ENCODE measurements at regions of chr3 and their contacts with region 1.

Region 1: DNA sequence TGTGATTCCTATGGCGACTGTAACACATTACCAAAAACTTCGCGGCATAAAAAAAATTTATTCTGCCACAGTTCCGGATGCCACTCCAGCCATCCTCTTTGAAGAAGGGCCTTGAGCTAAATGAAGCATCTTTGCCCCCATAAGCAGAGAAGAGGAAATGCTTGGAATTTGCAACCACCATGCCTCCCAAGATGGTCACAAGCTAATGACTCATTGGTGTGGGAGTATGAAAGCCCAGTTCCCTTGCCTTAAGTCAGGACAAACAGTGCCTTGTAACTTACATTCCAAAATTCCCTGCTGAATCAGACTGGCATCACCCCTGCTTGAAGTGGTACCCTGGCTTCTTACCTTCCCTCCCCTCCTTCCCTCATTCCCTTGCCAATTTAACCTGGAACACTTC is 1077.4 kb downstream of the EPHA3 start:
- DNase-seq: peak; percentile 8
- ATAC-seq: 0 out of 2 replicates have a peak, but pooled peaks have one; percentile 21
- H3K4me3 ChIP-seq: no peak overlapping the region
- H3K27ac ChIP-seq: no peak overlapping the region
- H3K4me1 ChIP-seq: no peaks in the 10 kb centered on the region
- H3K27me3 ChIP-seq: no peaks in the 10 kb centered on the region
- CTCF ChIP-seq: no peak
- POLR2A ChIP-seq: no peak
- RAD21 ChIP-seq: no peak

Region 2: DNA sequence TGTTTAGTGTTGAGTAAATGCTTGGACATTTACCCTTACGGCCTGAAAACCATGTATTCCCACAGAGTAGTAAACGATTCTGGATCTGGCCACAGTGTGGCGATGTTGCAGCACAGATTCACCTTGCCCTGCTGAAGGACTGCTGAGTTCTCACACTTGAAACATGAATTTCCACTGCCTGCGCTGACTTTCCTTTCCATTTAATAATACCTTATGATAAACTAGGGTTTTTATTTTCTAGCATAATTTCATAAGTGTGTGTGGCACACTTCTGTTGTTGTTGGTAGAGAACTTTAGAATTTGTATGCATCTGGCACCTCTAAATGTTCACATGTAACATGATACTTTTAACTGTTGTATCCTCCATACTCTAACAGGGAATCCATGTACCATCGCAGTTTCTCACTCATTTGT is 1981.2 kb before region 1 on chr3:
- CTCF ChIA-PET with region 1: no interaction called
- POLR2A ChIA-PET with region 1: no interaction called
- dilution Hi-C with region 1: no loop called
- in situ Hi-C with region 1: loop called (anchors 10 kb)
- intact Hi-C with region 1: no loop called
- DNase-seq: peak; percentile 67
- ATAC-seq: peak; percentile 100
- H3K4me3 ChIP-seq: no peak overlapping the region
- H3K27ac ChIP-seq: no peak overlapping the region
- H3K4me1 ChIP-seq: no peaks in the 10 kb centered on the region
- H3K27me3 ChIP-seq: 0 out of 2 replicates have a peak, but pooled peaks cover 1% of the 10 kb centered on the region
- CTCF ChIP-seq: peak; percentile 83
- POLR2A ChIP-seq: no peak
- RAD21 ChIP-seq: peak; percentile 87

Region 3: DNA sequence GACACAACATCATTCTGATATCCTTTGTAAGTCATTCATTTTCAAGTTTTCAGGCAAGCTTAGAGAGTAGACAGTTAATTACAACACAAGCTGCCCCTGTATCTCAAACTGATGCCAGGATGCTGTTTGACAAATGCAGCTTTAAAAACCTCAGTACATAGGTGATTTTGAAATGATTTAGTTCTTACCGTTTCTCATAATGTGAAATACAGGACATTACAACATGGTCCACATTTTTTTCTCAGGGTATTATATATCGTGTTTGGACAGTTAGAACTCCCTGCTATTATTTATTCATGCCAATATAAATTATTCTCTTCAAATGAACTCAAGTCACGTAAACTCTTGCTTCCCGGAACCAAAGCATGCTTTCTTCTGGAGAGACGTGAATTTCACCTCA is 63.5 kb before region 1 on chr3:
- CTCF ChIA-PET with region 1: no interaction called
- POLR2A ChIA-PET with region 1: no interaction called
- dilution Hi-C with region 1: no loop called
- in situ Hi-C with region 1: no loop called
- intact Hi-C with region 1: no loop called
- DNase-seq: no peak
- ATAC-seq: no peak
- H3K4me3 ChIP-seq: no peak overlapping the region
- H3K27ac ChIP-seq: no peak overlapping the region
- H3K4me1 ChIP-seq: no peaks in the 10 kb centered on the region
- H3K27me3 ChIP-seq: no peaks in the 10 kb centered on the region
- CTCF ChIP-seq: no peak
- POLR2A ChIP-seq: no peak
- RAD21 ChIP-seq: no peak